OCI-LY7 (cell line): ENCODE measurements at regions of chr16 and their contacts with region 1.

Region 1: GRCh38 chr16:57734925-57735754 is 430 bp upstream of the KATNB1 start:
- DNase-seq: peak; percentile 100
- H3K4me3 ChIP-seq: peak overlapping the region; percentile 86
- H3K27ac ChIP-seq: peak overlapping the region; percentile 21
- H3K4me1 ChIP-seq: peaks cover 16% of the 10 kb centered on the region
- CTCF ChIP-seq: no peak

Region 2: GRCh38 chr16:57447186-57447962 is 287.8 kb before region 1 on chr16 and contains the starts of genes CIAPIN1 and COQ9:
- CTCF ChIA-PET with region 1: no interaction called
- POLR2A ChIA-PET with region 1: no interaction called
- intact Hi-C with region 1: loop called (anchors 2 kb)
- DNase-seq: peak; percentile 97
- H3K4me3 ChIP-seq: peak within 1 kb of the TSS; percentile 96
- H3K27ac ChIP-seq: peak within 1 kb of the TSS; percentile 51
- H3K4me1 ChIP-seq: peaks cover 17% of the 10 kb centered on the region
- CTCF ChIP-seq: no peak
- total RNA-seq, gene CIAPIN1: 47.7 and 72.1 TPM in 2 replicates
- total RNA-seq, gene COQ9: 30.5 and 31.3 TPM in 2 replicates

Region 3: DNA sequence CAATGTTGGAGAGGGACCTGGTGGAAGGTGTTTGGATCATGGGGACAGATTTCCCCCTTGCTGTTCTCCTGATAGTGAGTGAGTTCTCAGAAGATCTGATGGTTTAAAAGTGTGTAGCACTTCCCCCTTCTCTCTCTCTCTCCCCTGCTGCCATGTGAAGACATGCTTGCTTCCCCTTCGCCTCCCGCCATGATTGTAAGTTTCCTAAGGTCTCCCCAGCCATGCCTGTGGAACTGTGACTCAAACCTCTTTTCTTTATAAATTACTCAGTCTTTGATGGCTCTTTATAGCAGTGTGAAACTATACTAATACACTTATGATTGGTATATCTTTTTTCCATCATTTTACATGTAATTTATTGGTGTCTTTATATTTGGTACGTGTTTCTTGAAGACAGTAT is 179.3 kb before region 1 on chr16:
- CTCF ChIA-PET with region 1: no interaction called
- POLR2A ChIA-PET with region 1: no interaction called
- intact Hi-C with region 1: no loop called
- DNase-seq: no peak
- H3K4me3 ChIP-seq: no peak overlapping the region
- H3K27ac ChIP-seq: no peak overlapping the region
- H3K4me1 ChIP-seq: no peaks in the 10 kb centered on the region
- CTCF ChIP-seq: no peak